ENCODE measurements at regions of chr22 and their contacts with region 1.

Region 1: DNA sequence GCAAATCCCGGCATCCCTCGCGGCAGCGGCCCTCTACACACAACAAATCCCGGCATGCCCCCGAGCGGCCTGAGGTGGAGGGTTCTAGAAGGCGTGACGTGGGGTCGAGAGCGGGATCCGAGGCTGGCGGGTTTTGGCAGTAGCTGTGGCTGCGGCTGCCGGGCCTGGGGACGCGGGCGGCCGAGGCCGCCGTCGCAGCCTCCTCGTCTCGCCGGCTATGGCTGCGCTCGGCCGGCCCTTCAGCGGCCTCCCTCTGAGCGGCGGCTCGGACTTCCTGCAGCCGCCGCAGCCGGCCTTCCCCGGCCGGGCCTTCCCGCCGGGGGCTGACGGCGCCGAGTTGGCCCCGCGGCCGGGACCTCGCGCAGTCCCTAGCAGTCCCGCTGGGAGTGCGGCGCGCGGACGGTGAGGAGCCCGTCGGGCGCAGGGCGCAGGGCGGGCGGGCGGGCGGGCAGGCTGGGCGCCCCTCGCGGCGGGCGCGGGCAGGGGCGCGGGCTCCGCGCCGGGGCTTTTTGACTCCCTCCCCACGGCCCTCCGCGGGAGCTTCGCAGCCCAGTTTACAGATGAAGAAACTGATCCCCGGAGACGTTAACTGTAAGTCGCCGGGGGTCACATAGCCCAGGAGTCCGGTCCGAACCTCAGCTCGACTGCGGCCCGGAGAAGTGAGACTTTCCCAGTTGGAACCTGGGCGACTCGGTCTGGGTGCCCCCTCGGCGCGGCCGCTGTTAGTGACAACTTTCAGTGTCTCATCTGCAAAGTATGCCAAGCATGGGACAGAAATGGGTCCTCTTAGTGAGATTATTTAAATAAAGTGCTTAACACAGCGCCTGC is at the start of gene CCDC117:
- DNase-seq: peak; percentile 84
- ATAC-seq: peak; percentile 93
- H3K4me3 ChIP-seq: peak within 1 kb of the TSS; percentile 96
- H3K27ac ChIP-seq: peak within 1 kb of the TSS; percentile 89
- H3K4me1 ChIP-seq: no peaks in the 10 kb centered on the region
- H3K27me3 ChIP-seq: no peaks in the 10 kb centered on the region
- CTCF ChIP-seq: peak in 2 of 3 experiments; percentile 12 to 19; a peak in 2 of 6 replicates
- EP300 ChIP-seq: peak; percentile 5 to 40; a peak in 1 of 4 replicates
- POLR2A ChIP-seq: peak; percentile 82
- RAD21 ChIP-seq: peak; percentile 13; the same call in 1 of the 2 replicates
- polyA plus RNA-seq, gene CCDC117: 6.3 to 8.3 TPM

Region 2: DNA sequence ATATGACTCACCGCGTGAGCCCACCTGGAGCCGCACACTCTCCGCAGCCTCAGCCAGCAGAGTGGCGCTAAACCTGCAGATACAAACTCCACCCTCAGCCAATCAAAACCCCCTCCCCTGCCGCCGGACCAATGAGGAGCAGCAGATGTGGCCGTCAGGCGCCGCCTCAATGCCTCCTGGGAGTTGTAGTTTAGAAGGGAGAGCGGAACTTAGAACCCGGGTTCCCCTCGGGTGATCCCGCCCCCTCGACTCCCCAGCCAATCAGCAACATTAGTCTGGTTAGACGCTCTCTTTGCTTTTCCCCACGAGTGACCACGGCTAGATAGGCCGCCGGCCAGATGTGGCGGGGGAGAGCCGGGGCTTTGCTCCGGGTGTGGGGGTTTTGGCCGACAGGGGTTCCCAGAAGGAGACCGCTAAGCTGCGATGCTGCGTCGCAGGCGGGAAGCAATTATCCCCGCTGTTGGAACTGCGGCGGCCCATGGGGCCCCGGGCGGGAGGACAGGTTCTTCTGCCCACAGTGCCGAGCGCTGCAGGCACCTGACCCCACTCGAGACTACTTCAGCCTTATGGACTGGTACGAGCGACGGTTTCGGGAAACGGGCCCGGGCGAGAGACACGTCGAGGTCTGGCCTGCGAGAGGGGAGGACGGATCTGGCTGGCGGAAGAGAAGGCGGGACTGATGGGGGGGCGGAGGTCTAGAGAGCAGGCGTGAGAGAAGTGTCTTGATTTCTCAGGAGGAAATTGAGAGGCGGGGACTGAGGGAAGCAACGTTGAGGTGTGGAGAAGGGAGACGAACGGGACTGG is 30.9 kb before region 1 on chr22 and contains the starts of genes CHEK2 and HSCB:
- CTCF ChIA-PET with region 1: interaction called, 3 read pairs
- POLR2A ChIA-PET with region 1: interaction called, 7 read pairs
- RAD21 ChIA-PET with region 1: no interaction called
- SMC1A ChIA-PET with region 1: interaction called, 3 read pairs
- in situ Hi-C with region 1: no loop called
- intact Hi-C with region 1: loop called (anchors 2 kb)
- DNase-seq: peak; percentile 96
- ATAC-seq: peak; percentile 95
- H3K4me3 ChIP-seq: peak within 1 kb of the TSS; percentile 69
- H3K27ac ChIP-seq: peak within 1 kb of the TSS; percentile 82
- H3K4me1 ChIP-seq: peaks cover 7% of the 10 kb centered on the region
- H3K27me3 ChIP-seq: no peaks in the 10 kb centered on the region
- CTCF ChIP-seq: peak in 1 of 3 experiments; percentile 27; a peak in 1 of 6 replicates
- EP300 ChIP-seq: no peak
- POLR2A ChIP-seq: peak; percentile 94
- RAD21 ChIP-seq: no peak
- polyA plus RNA-seq, gene CHEK2: 31.1 to 31.4 TPM
- polyA plus RNA-seq, gene HSCB: 10.6 to 19.0 TPM

Region 3: GRCh38 chr22:28759861-28760560 is 12.8 kb before region 1 on chr22:
- CTCF ChIA-PET with region 1: interaction called, 5 read pairs
- POLR2A ChIA-PET with region 1: interaction called, 21 read pairs
- RAD21 ChIA-PET with region 1: interaction called, 22 read pairs
- SMC1A ChIA-PET with region 1: interaction called, 5 read pairs
- in situ Hi-C with region 1: no loop called
- intact Hi-C with region 1: no loop called
- DNase-seq: peak; percentile 21
- ATAC-seq: peak; percentile 69
- H3K4me3 ChIP-seq: peak overlapping the region; percentile 44; the same call in 1 of the 2 replicates
- H3K27ac ChIP-seq: peak overlapping the region; percentile 74
- H3K4me1 ChIP-seq: peaks cover 8% of the 10 kb centered on the region
- H3K27me3 ChIP-seq: no peaks in the 10 kb centered on the region
- CTCF ChIP-seq: no peak
- EP300 ChIP-seq: no peak
- POLR2A ChIP-seq: no peak
- RAD21 ChIP-seq: no peak